Calu3 (cell line): ENCODE measurements at regions of chr1 and their contacts with region 1.

Region 1: GRCh38 chr1:147466543-147466942 is 74.8 kb upstream of the BCL9 start:
- DNase-seq: no peak
- H3K4me3 Mint-ChIP-seq: no peak overlapping the region
- H3K27ac Mint-ChIP-seq: no peak overlapping the region
- H3K4me1 Mint-ChIP-seq: no peaks in the 10 kb centered on the region
- H3K27me3 Mint-ChIP-seq: peaks cover 70% of the 10 kb centered on the region
- CTCF ChIP-seq: no peak

Region 2: DNA sequence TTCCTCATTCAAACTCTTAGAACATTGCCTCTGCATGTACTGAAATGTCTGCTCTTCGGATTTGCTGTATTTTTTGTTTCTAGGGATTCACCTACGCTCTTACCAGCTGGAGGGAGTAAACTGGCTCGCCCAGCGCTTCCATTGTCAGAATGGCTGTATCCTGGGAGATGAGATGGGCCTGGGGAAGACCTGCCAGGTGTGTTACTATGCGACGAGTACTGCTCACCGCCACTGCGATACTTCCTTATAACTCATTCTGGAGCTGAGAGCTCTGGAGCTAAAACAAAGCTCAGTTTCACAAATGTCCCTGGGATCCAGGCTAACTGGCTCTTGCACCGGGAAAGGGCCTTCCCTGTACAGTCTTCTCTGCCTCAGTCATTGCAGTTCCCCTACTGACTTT is 214.0 kb before region 1 on chr1:
- CTCF ChIA-PET with region 1: no interaction called
- intact Hi-C with region 1: no loop called
- DNase-seq: no peak
- H3K4me3 Mint-ChIP-seq: no peak overlapping the region
- H3K27ac Mint-ChIP-seq: no peak overlapping the region
- H3K4me1 Mint-ChIP-seq: peaks cover 5% of the 10 kb centered on the region
- H3K27me3 Mint-ChIP-seq: no peaks in the 10 kb centered on the region
- CTCF ChIP-seq: no peak

Region 3: GRCh38 chr1:147417028-147417427 is 49.5 kb before region 1 on chr1:
- CTCF ChIA-PET with region 1: no interaction called
- intact Hi-C with region 1: loop called (anchors 2 kb)
- DNase-seq: no peak
- H3K4me3 Mint-ChIP-seq: no peak overlapping the region
- H3K27ac Mint-ChIP-seq: no peak overlapping the region
- H3K4me1 Mint-ChIP-seq: no peaks in the 10 kb centered on the region
- H3K27me3 Mint-ChIP-seq: peaks cover 63% of the 10 kb centered on the region
- CTCF ChIP-seq: no peak

Region 4: GRCh38 chr1:147627435-147628110 is 161.0 kb after region 1 on chr1:
- CTCF ChIA-PET with region 1: no interaction called
- intact Hi-C with region 1: no loop called
- DNase-seq: peak; percentile 74
- H3K4me3 Mint-ChIP-seq: no peak overlapping the region
- H3K27ac Mint-ChIP-seq: no peak overlapping the region
- H3K4me1 Mint-ChIP-seq: no peaks in the 10 kb centered on the region
- H3K27me3 Mint-ChIP-seq: no peaks in the 10 kb centered on the region
- CTCF ChIP-seq: peak; percentile 94